ENCODE measurements at regions of chr1 and their contacts with region 1.

Region 1: GRCh38 chr1:21659099-21659923 is 9.8 kb downstream of the RAP1GAP start:
- DNase-seq: peak; percentile 72 to 89 (median 75)
- ATAC-seq: peak; percentile 72 to 78 (median 76)
- H3K4me3 ChIP-seq: peak overlapping the region in 4 of 12 donors; percentile 23 to 33 (median 28)
- H3K27ac ChIP-seq: no peak overlapping the region
- H3K4me1 ChIP-seq: peaks cover 0 to 14% (median 4%) of the 10 kb centered on the region in 12 donors
- H3K27me3 ChIP-seq: peaks cover 0 to 16% (median 0%) of the 10 kb centered on the region in 9 donors
- CTCF ChIP-seq: peak; percentile 90 to 99 (median 94)
- POLR2A ChIP-seq: peak in 1 of 2 donors; percentile 11

Region 2: DNA sequence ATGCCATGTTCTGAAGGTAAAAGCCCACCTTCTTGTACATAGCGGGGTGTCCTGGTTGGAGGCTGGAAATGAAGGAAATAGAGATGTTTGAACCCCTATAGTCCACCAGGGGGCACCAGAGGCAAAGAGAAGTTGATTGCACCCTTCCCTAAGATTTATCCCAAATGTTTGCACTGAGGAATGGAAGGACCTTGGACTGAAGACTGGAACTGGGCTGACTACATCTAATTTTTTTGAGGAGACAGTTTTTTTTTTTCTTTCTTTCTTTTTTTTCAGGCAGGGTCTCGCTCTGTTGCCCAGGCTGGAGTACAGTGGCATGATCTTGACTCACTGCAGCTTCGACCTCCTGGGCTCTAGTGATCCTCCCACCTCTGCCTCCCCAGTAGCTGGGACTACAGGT is 427.3 kb before region 1 on chr1:
- intact Hi-C with region 1: loop called in 9 of 10 experiments (anchors 5 to 10 kb)
- DNase-seq: peak in 2 of 5 donors; percentile 45 to 56
- ATAC-seq: peak; percentile 19 to 75 (median 70)
- H3K4me3 ChIP-seq: no peak overlapping the region
- H3K27ac ChIP-seq: no peak overlapping the region
- H3K4me1 ChIP-seq: peaks cover 0 to 16% (median 1%) of the 10 kb centered on the region in 12 donors
- H3K27me3 ChIP-seq: no peaks in the 10 kb centered on the region
- CTCF ChIP-seq: peak; percentile 72 to 92 (median 82)
- POLR2A ChIP-seq: no peak

Region 3: DNA sequence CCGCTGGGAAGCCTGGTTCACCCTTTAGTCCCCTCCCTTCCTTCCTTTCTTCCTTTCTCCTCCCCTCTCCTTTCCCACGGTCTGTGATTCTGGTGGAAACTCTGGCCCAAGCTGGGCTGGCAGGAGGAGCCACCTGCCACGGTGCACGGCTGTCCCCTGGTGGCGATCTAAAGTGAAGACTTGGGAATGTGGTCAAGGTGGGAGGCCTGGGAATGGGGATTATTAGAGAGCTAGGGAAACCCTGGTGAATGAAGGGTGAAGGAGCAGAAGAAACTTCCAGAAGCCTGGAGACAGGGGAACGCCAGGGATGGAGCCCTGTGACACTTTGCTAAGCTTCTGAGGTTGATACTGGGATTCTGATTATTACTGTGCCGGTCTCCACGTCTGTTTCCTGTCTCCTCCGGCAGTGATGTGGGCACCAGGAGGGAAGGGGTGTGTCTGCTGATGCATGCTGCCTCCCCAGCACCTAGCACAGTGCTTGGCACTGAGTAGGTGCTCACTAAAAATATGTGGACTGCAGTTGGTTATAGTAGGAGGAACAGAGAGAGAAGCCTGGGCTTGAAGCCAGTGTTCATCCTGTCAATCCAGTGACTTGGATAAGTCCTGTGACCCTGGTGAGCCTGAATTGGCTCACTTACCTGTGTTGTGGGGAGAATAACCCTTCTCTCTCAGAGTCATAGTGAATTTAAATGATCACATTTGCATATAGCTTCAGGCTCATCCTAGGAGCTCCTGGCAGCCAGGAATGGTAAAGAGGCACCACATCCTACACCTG is 290.6 kb before region 1 on chr1:
- intact Hi-C with region 1: loop called (anchors 2 to 5 kb)
- DNase-seq: peak; percentile 80 to 88 (median 83)
- ATAC-seq: peak; percentile 79 to 96 (median 94)
- H3K4me3 ChIP-seq: peak overlapping the region in 1 of 12 donors; percentile 12
- H3K27ac ChIP-seq: peak overlapping the region in 1 of 12 donors; percentile 17
- H3K4me1 ChIP-seq: peaks cover 0 to 12% (median 1%) of the 10 kb centered on the region in 12 donors
- H3K27me3 ChIP-seq: no peaks in the 10 kb centered on the region
- CTCF ChIP-seq: peak; percentile 96 to 100 (median 99)
- POLR2A ChIP-seq: no peak

Region 4: DNA sequence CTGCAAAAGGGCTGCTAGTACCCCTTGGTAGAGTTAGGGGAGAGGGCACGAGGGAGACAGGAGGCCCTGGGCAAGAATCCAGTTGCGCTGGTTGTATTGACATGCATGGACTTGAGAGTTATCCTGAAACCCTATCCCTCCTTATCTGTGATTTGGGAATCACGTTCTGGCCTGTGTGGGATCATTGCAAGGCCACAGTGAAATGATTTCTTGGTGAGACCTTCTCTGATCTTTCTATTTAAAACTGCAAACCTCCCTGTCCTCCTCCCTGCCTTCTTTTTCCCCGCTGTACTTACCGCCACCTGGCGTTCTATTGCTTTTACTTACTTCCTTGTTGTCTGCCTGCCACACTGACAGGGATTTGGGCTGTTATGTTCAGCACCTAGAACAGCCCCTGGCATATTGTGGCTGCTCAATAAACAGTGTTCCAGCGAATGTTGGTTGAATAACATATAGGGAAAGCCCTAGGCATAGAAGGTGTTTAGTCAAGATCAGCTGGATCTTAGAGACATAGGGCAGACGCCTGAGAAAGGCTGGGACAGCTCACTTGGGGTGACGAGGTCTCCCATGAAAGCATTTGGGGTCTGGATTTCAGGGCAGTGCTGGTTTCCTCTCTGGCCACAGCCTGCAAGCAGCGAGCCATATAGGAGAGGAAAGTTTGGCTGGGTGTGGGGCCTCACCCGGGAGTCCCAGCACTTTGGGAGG is 124.5 kb before region 1 on chr1:
- intact Hi-C with region 1: loop called in 1 of 10 experiments (anchors 10 kb)
- DNase-seq: peak in 3 of 5 donors; percentile 27 to 43 (median 41)
- ATAC-seq: peak in 1 of 4 donors; percentile 14
- H3K4me3 ChIP-seq: no peak overlapping the region
- H3K27ac ChIP-seq: peak overlapping the region in 1 of 12 donors; percentile 44
- H3K4me1 ChIP-seq: peaks cover 2 to 46% (median 29%) of the 10 kb centered on the region in 12 donors
- H3K27me3 ChIP-seq: peaks cover 0 to 6% (median 0%) of the 10 kb centered on the region in 9 donors
- CTCF ChIP-seq: peak in 11 of 12 donors; percentile 14 to 56 (median 43)
- POLR2A ChIP-seq: no peak

Region 5: DNA sequence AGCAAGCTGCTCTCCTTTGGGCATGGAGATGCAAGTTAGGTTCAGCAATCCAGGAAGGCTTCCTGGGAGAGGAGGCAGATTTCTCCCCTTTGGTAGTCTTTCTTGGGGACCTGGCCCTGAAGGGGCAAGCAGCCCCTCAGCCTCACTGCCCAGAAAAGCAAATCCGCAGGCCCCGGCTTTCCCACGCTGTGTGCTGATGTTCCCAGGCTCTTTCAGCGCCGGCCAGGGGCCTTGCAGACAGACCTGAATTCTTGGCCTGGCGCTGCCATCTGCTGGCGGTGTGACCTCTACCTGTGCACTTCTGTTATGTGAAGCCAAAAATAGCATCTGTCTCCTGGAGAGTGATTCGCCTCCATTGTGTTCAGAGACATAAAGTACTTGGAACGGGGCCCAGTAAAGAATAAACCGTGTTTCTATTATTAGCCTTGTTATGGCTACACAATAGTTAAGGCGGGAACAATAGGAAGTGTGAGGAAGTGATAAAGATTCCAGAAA is 85.3 kb before region 1 on chr1:
- intact Hi-C with region 1: loop called in 3 of 10 experiments (anchors 2 to 5 kb)
- DNase-seq: peak; percentile 85 to 92 (median 90)
- ATAC-seq: peak; percentile 89 to 94 (median 92)
- H3K4me3 ChIP-seq: peak overlapping the region in 2 of 12 donors; percentile 3 to 11
- H3K27ac ChIP-seq: peak overlapping the region; percentile 68 to 96 (median 82)
- H3K4me1 ChIP-seq: peaks cover 0 to 27% (median 21%) of the 10 kb centered on the region in 12 donors
- H3K27me3 ChIP-seq: peaks cover 0 to 4% (median 0%) of the 10 kb centered on the region in 9 donors
- CTCF ChIP-seq: peak; percentile 46 to 81 (median 66)
- POLR2A ChIP-seq: no peak

Region 6: GRCh38 chr1:21594935-21595897 is 64.1 kb before region 1 on chr1:
- intact Hi-C with region 1: loop called in 1 of 10 experiments (anchors 5 kb)
- DNase-seq: peak; percentile 53 to 80 (median 70)
- ATAC-seq: peak in 2 of 4 donors; percentile 48 to 56
- H3K4me3 ChIP-seq: no peak overlapping the region
- H3K27ac ChIP-seq: no peak overlapping the region
- H3K4me1 ChIP-seq: peaks cover 0 to 7% (median 0%) of the 10 kb centered on the region in 12 donors
- H3K27me3 ChIP-seq: no peaks in the 10 kb centered on the region
- CTCF ChIP-seq: peak; percentile 50 to 71 (median 64)
- POLR2A ChIP-seq: no peak

Region 7: DNA sequence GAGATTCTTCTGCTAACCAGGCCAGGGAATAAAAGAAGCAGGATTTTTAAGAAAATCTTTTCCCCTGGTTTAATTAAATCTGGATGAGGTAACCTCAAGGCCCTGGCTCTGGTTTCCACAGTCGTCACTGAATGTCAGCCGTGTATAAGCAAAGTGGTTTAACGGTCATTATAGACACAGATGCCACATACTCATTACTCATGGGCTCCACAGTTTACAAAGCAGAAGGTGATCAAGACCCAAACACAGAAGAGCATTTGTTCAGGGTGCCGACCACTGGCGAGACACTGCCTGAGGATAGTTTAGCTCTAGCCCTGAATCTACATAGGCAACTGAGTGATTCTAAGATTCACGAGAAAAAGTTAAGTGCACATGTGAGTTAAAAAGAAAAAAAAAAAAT is 37.6 kb after region 1 on chr1:
- intact Hi-C with region 1: no loop called
- DNase-seq: no peak
- ATAC-seq: no peak
- H3K4me3 ChIP-seq: no peak overlapping the region
- H3K27ac ChIP-seq: no peak overlapping the region
- H3K4me1 ChIP-seq: no peaks in the 10 kb centered on the region
- H3K27me3 ChIP-seq: no peaks in the 10 kb centered on the region
- CTCF ChIP-seq: no peak
- POLR2A ChIP-seq: no peak

Measured in heart left ventricle (tissue), 16 donors.